IMR-90 (cell line): ENCODE measurements at regions of chr17 and their contacts with region 1.

Region 1: DNA sequence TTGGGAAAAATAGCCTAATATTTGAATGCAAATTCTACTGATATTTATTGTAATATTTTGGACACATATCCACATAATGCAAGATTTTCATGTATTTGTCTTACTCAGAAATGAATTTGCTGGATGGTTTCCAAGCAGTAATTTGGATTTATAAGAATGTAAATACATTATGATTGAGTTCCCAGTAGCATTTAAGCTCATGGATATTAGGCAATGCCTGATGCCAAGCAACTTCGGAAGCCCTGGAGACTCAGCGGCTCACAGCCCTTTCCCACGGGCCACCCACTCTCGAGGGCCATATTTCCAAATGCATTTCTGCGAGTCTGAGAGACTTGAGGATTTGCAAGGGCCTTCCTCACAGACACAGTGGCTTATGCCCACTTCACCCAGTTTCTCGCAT is 62.1 kb upstream of the MYOCD start:
- DNase-seq: peak; percentile 36
- ATAC-seq: no peak
- H3K4me3 ChIP-seq: no peak overlapping the region
- H3K27ac ChIP-seq: no peak overlapping the region
- H3K4me1 ChIP-seq: peaks cover 10% of the 10 kb centered on the region
- H3K27me3 ChIP-seq: no peaks in the 10 kb centered on the region
- CTCF ChIP-seq: no peak
- POLR2A ChIP-seq: no peak
- RAD21 ChIP-seq: no peak

Region 2: DNA sequence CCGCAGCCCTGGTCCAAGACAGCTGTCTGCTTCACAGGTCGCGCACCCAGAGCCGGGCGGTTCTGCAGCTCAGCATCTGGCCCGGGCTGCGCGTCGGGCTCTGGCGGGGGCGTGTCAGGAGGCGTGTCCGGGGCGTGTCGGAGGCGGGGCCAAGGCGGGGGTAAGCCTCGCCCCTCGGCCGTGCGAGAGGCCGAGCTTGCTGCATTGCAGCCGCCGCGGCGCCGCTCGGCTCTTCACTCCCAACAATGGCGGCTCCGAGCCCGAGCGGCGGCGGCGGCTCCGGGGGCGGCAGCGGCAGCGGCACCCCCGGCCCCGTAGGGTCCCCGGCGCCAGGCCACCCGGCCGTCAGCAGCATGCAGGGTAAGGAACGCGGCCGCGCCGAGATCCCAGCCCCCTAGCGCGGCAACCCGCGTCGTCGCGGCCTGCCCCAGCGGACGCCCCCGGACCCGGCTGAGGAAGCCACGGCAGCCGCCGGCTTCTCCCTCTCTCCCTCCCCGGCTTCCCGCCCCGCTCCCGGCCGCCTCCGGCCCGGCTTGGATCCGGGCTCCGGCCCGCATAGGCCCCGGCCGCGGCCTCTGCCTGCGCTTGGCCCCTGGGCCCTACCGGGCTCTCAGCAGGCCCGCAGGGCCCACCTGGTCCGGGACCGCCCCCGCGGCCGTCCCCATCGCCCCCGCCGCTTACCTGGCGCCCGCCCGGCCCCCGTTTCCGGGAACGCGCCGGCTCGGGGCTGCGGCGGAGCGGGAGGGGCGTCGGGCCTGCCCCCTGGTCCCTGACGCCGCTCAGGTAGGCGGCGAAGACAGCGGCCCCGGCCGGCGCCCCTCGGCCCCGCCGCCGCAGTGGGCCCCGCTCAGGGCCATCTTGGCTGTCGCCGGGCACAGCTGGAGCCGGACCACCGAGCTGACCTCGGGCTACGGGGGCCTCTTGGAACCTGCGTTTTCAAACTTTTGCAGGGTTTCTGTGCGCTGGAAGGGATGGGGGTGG is 582.6 kb before region 1 on chr17 and contains the start of gene MAP2K4:
- CTCF ChIA-PET with region 1: no interaction called
- POLR2A ChIA-PET with region 1: no interaction called
- dilution Hi-C with region 1: no loop called
- in situ Hi-C with region 1: no loop called
- intact Hi-C with region 1: no loop called
- DNase-seq: peak; percentile 84
- ATAC-seq: peak; percentile 99
- H3K4me3 ChIP-seq: peak within 1 kb of the TSS; percentile 67
- H3K27ac ChIP-seq: peak within 1 kb of the TSS; percentile 55
- H3K4me1 ChIP-seq: peaks cover 2% of the 10 kb centered on the region
- H3K27me3 ChIP-seq: peaks cover 3% of the 10 kb centered on the region; the same call in 1 of the 2 replicates
- CTCF ChIP-seq: no peak
- POLR2A ChIP-seq: peak; percentile 94
- RAD21 ChIP-seq: no peak
- total RNA-seq, gene MAP2K4: 32.6 and 33.3 TPM in 2 replicates

Region 3: GRCh38 chr17:12580640-12581039 is 22.9 kb before region 1 on chr17:
- CTCF ChIA-PET with region 1: no interaction called
- POLR2A ChIA-PET with region 1: no interaction called
- dilution Hi-C with region 1: no loop called
- in situ Hi-C with region 1: no loop called
- intact Hi-C with region 1: loop called (anchors 1 kb)
- DNase-seq: peak; percentile 22
- ATAC-seq: 0 out of 2 replicates have a peak, but pooled peaks have one; percentile 32
- H3K4me3 ChIP-seq: no peak overlapping the region
- H3K27ac ChIP-seq: no peak overlapping the region
- H3K4me1 ChIP-seq: peaks cover 2% of the 10 kb centered on the region
- H3K27me3 ChIP-seq: no peaks in the 10 kb centered on the region
- CTCF ChIP-seq: no peak
- POLR2A ChIP-seq: no peak
- RAD21 ChIP-seq: no peak

Region 4: DNA sequence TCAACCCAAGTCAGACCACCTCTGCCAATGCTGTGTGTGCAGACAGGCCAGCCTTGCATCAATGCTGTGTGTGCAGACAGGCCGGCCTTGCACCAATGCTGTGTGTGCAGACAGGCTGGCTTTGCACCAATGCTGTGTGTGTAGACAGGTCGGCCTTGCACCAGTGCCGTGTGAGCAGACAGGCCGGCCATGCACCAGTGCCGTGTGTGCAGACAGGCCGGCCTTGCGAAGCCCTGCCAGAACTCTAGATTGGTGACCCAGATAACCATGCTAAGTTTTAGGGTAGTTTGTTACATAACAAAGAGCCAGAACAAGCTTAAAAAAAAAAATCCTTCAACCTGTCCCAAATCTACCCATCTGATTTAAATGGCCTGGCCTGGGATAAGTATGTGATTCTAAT is 359.9 kb after region 1 on chr17:
- CTCF ChIA-PET with region 1: no interaction called
- POLR2A ChIA-PET with region 1: no interaction called
- dilution Hi-C with region 1: no loop called
- in situ Hi-C with region 1: no loop called
- intact Hi-C with region 1: no loop called
- DNase-seq: no peak
- ATAC-seq: no peak
- H3K4me3 ChIP-seq: no peak overlapping the region
- H3K27ac ChIP-seq: no peak overlapping the region
- H3K4me1 ChIP-seq: no peaks in the 10 kb centered on the region; the same call in 1 of the 2 replicates
- H3K27me3 ChIP-seq: no peaks in the 10 kb centered on the region
- CTCF ChIP-seq: no peak
- POLR2A ChIP-seq: no peak
- RAD21 ChIP-seq: no peak